Activated CD4-positive, alpha-beta T cell treated with anti-CD3 and anti-CD28 coated beads for 36 hours (primary cell): ENCODE measurements at regions of chr4 and their contacts with region 1.

Region 1: DNA sequence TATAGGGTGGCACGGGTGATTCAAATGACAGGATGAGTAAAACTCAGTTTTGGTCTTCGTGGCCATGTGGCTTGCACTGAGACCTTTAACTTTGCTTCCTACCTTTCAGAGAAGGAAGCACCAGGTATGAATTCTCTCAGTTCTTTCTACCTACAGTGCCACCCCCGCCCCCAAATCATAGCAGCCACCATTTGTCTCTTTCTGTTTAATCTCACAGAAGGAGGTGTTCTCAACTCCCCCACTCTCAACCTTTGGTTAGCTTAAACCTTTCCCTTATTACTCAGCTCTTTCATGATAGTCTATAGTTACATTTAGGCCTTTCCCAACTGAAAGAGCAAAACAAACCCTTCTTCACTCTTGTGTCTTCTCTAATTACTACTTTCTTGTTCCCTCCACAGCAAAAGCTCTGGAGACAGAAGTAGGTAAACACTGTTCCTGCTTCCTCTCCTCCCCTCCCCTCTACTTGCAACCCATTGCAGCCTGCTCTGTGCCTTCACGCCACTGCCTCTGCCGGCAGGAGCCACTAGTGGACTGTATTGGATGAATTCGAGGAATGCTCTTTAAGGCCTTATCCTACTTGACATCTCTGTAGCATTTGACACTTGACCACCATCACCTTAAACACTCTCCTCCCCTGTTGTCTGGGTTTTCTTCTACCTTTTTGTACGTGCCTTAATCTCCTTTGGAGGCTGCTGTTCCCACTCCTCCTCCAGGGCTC is 123.7 kb downstream of the AFF1 start:
- DNase-seq: peak; percentile 79
- ATAC-seq: peak; percentile 80
- H3K4me3 Mint-ChIP-seq: peak overlapping the region; percentile 0
- H3K27ac Mint-ChIP-seq: peak overlapping the region; percentile 74
- H3K4me1 Mint-ChIP-seq: peaks cover 69% of the 10 kb centered on the region
- H3K27me3 Mint-ChIP-seq: no peaks in the 10 kb centered on the region

Region 2: GRCh38 chr4:87017580-87018342 is 40.8 kb before region 1 on chr4:
- CTCF ChIA-PET with region 1: interaction called, 4 read pairs
- POLR2A ChIA-PET with region 1: no interaction called
- intact Hi-C with region 1: loop called in 1 of 2 experiments (anchors 1 kb)
- DNase-seq: peak; percentile 58
- ATAC-seq: peak; percentile 91
- H3K4me3 Mint-ChIP-seq: peak overlapping the region; percentile 4
- H3K27ac Mint-ChIP-seq: peak overlapping the region; percentile 97
- H3K4me1 Mint-ChIP-seq: peaks cover 89% of the 10 kb centered on the region
- H3K27me3 Mint-ChIP-seq: no peaks in the 10 kb centered on the region

Region 3: GRCh38 chr4:87073199-87074120 is 14.9 kb after region 1 on chr4:
- CTCF ChIA-PET with region 1: interaction called, 4 read pairs
- POLR2A ChIA-PET with region 1: interaction called, 3 read pairs
- intact Hi-C with region 1: loop called (anchors 1 kb)
- DNase-seq: peak; percentile 87
- ATAC-seq: peak; percentile 96
- H3K4me3 Mint-ChIP-seq: peak overlapping the region; percentile 63
- H3K27ac Mint-ChIP-seq: peak overlapping the region; percentile 91
- H3K4me1 Mint-ChIP-seq: peaks cover 51% of the 10 kb centered on the region
- H3K27me3 Mint-ChIP-seq: no peaks in the 10 kb centered on the region

Region 4: DNA sequence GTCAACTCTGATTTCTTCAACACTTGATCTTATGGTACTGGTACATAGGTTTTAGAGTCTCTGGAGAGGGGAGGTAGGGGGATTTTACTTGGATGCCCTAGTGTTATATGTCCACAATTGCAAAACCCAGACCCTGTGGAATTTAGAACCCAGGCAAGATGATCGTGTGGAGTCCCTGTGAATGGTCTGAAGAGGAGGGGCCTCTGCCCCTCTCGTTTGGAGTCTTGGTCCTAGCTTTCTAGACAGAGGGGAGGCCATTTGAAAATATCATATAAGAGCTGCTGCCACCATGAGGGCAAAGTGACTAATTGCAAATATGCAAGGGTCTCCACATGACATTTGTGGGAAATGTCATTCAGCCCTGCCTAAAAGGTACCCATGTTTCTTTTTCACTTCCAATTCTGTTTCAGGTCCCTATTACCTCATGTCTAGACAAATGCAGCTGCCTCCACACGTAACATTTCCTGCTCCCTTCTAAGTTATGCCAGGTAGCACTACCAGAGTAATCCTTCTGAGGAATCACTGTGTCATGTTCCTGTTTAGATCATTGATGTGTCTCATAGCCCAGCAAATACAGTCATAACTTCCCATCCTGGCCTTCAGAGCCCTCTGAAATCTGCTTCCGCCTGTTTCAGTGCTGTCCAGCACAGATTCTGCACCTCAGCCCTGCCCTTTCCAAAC is 35.1 kb after region 1 on chr4:
- CTCF ChIA-PET with region 1: interaction called, 8 read pairs
- POLR2A ChIA-PET with region 1: no interaction called
- intact Hi-C with region 1: loop called (anchors 1 kb)
- DNase-seq: peak; percentile 60
- ATAC-seq: peak; percentile 79
- H3K4me3 Mint-ChIP-seq: no peak overlapping the region
- H3K27ac Mint-ChIP-seq: peak overlapping the region; percentile 78
- H3K4me1 Mint-ChIP-seq: peaks cover 52% of the 10 kb centered on the region
- H3K27me3 Mint-ChIP-seq: no peaks in the 10 kb centered on the region

Region 5: DNA sequence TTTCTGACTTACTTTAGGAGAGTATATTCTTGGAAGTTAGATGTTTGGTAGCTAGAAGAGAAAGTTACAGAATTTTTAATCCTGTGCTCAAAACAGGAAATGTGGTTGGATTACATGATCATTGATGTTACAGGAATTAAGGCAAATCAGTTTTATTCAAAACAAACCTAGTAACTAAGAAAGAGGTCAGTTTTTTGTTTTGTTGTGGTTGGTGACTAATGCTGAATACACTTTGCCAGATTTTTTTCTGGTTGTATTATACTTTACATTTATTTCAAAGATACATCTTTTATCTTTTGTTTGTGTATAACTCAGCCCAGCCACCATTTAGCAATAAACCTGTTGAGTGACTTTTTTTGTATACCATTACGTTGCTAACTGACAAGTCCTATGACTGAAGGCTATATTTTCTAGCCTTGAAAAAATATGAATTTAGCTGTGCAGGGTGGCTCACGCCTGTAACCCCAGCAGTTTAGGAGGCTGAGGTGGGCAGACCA is 45.2 kb after region 1 on chr4:
- CTCF ChIA-PET with region 1: interaction called, 4 read pairs
- POLR2A ChIA-PET with region 1: no interaction called
- intact Hi-C with region 1: loop called (anchors 1 kb)
- DNase-seq: no peak
- ATAC-seq: peak; percentile 66
- H3K4me3 Mint-ChIP-seq: peak overlapping the region; percentile 7
- H3K27ac Mint-ChIP-seq: peak overlapping the region; percentile 77
- H3K4me1 Mint-ChIP-seq: peaks cover 63% of the 10 kb centered on the region
- H3K27me3 Mint-ChIP-seq: no peaks in the 10 kb centered on the region